ENCODE measurements at regions of chr16 and their contacts with region 1.

Region 1: DNA sequence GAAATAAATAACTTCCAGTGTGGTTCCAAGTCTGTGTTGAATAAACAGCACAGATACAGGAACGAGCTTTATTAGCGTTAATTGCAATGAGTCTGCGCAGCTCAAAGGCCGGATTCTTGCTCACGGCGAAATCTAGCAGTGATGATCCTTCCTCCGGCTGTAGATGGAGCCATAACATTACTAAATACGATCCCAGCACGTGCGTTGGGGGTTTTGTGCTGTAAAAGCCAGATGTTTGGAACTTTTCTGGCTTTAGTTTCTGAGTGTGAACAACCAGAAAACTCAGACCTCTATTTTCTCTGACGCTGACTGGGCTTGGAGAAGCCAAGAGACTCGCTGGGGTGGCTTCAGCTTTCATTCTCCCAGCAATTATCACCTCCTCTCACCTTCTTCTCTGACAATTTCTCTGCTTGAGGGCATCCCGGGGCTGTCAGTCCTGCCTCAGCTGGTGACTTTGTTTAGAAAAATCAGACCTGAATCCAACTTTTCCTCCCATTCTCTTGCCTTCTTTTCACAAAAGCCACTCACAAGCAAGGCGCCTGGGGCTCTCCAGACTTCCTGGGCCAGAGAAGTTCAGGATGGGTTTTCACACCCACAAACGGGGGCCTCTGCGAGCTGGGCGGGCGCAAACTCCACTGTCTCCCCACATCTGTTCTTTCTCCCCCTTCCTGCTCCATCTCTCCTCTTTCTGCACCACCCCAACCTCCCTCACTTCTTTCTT is 47.1 kb upstream of the AKTIP start:
- DNase-seq: peak; percentile 47
- ATAC-seq: peak; percentile 65
- H3K4me3 Mint-ChIP-seq: no peak overlapping the region
- H3K27ac Mint-ChIP-seq: no peak overlapping the region
- H3K4me1 Mint-ChIP-seq: peaks cover 28% of the 10 kb centered on the region
- H3K27me3 Mint-ChIP-seq: peaks cover 25% of the 10 kb centered on the region
- CTCF ChIP-seq: 0 out of 2 replicates have a peak, but pooled peaks have one; percentile 13

Region 2: GRCh38 chr16:53445534-53445933 is 104.6 kb before region 1 on chr16:
- CTCF ChIA-PET with region 1: no interaction called
- POLR2A ChIA-PET with region 1: no interaction called
- DNase-seq: no peak
- ATAC-seq: no peak
- H3K4me3 Mint-ChIP-seq: no peak overlapping the region
- H3K27ac Mint-ChIP-seq: no peak overlapping the region
- H3K4me1 Mint-ChIP-seq: no peaks in the 10 kb centered on the region
- H3K27me3 Mint-ChIP-seq: no peaks in the 10 kb centered on the region
- CTCF ChIP-seq: no peak

Region 3: GRCh38 chr16:53598511-53599275 is 48.6 kb after region 1 on chr16:
- CTCF ChIA-PET with region 1: interaction called, 14 read pairs
- POLR2A ChIA-PET with region 1: no interaction called
- DNase-seq: no peak
- ATAC-seq: no peak
- H3K4me3 Mint-ChIP-seq: no peak overlapping the region
- H3K27ac Mint-ChIP-seq: no peak overlapping the region
- H3K4me1 Mint-ChIP-seq: no peaks in the 10 kb centered on the region
- H3K27me3 Mint-ChIP-seq: no peaks in the 10 kb centered on the region
- CTCF ChIP-seq: no peak

Region 4: DNA sequence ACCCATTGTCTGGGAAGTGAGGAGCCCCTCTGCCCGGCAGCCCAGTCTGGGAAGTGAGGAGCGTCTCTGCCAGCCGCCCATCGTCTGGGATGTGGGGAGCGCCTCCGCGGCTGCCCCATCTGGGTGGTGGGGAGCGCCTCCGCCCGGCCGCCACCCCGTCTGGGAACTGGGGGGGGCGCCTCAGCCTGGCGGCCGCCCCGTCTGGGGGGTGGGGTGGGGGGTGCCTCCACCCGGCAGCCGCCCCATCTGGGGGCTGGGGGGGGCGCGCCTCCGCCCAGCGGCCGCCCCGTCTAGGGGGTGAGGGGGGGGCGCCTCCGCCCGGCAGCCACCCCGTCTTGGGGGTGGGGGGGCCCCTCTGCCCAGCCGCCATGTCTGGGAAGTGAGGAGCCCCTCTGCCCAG is 75.1 kb after region 1 on chr16:
- CTCF ChIA-PET with region 1: no interaction called
- POLR2A ChIA-PET with region 1: no interaction called
- DNase-seq: no peak
- ATAC-seq: no peak
- H3K4me3 Mint-ChIP-seq: no peak overlapping the region
- H3K27ac Mint-ChIP-seq: no peak overlapping the region
- H3K4me1 Mint-ChIP-seq: peaks cover 5% of the 10 kb centered on the region
- H3K27me3 Mint-ChIP-seq: no peaks in the 10 kb centered on the region
- CTCF ChIP-seq: no peak

Region 5: GRCh38 chr16:53692142-53692541 is 142.0 kb after region 1 on chr16:
- CTCF ChIA-PET with region 1: interaction called, 10 read pairs
- POLR2A ChIA-PET with region 1: no interaction called
- DNase-seq: peak; percentile 49
- ATAC-seq: peak; percentile 24; the same call in 1 of the 2 replicates
- H3K4me3 Mint-ChIP-seq: no peak overlapping the region
- H3K27ac Mint-ChIP-seq: no peak overlapping the region; the same call in 1 of the 2 replicates
- H3K4me1 Mint-ChIP-seq: no peaks in the 10 kb centered on the region
- H3K27me3 Mint-ChIP-seq: no peaks in the 10 kb centered on the region
- CTCF ChIP-seq: no peak

Region 6: GRCh38 chr16:53703590-53704444 is 153.7 kb after region 1 on chr16 and contains the starts of genes FTO and RPGRIP1L:
- CTCF ChIA-PET with region 1: interaction called, 15 read pairs
- POLR2A ChIA-PET with region 1: no interaction called
- DNase-seq: peak; percentile 100
- ATAC-seq: peak; percentile 98
- H3K4me3 Mint-ChIP-seq: peak within 1 kb of the TSS; percentile 99
- H3K27ac Mint-ChIP-seq: peak within 1 kb of the TSS; percentile 95
- H3K4me1 Mint-ChIP-seq: peaks cover 14% of the 10 kb centered on the region
- H3K27me3 Mint-ChIP-seq: no peaks in the 10 kb centered on the region
- CTCF ChIP-seq: no peak
- total RNA-seq, gene FTO: 57.4 to 62.6 TPM (median 59.6 TPM) in 3 replicates
- total RNA-seq, gene RPGRIP1L: 9.8 to 11.7 TPM (median 10.9 TPM) in 3 replicates

Region 7: DNA sequence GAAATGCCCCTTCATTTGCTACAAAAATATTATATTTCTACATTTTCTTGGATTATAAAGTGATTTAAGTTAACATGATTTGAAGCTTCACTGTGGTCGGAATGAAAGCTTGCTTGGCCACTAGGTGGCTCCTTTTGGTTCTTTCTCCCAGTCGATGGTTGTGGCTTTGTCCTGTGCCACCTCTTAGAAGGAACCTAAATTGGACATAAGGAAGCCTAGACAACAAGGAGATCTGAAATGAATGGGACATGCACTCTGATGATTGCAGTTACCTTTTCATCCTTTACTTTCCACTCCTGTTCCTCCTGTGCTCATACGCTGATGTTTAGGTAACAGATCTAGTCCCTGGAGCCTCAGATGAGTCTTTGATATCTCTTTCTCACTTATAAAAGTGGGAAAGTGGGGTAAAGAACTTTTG is 193.0 kb after region 1 on chr16:
- CTCF ChIA-PET with region 1: interaction called, 13 read pairs
- POLR2A ChIA-PET with region 1: no interaction called
- DNase-seq: peak; percentile 21
- ATAC-seq: peak; percentile 57; the same call in 1 of the 2 replicates
- H3K4me3 Mint-ChIP-seq: no peak overlapping the region
- H3K27ac Mint-ChIP-seq: no peak overlapping the region
- H3K4me1 Mint-ChIP-seq: peaks cover 27% of the 10 kb centered on the region
- H3K27me3 Mint-ChIP-seq: no peaks in the 10 kb centered on the region
- CTCF ChIP-seq: peak; percentile 49

Region 8: GRCh38 chr16:53755536-53755910 is 205.4 kb after region 1 on chr16:
- CTCF ChIA-PET with region 1: interaction called, 13 read pairs
- POLR2A ChIA-PET with region 1: no interaction called
- DNase-seq: no peak
- ATAC-seq: no peak
- H3K4me3 Mint-ChIP-seq: no peak overlapping the region
- H3K27ac Mint-ChIP-seq: no peak overlapping the region
- H3K4me1 Mint-ChIP-seq: peaks cover 16% of the 10 kb centered on the region
- H3K27me3 Mint-ChIP-seq: no peaks in the 10 kb centered on the region; the same call in 1 of the 2 replicates
- CTCF ChIP-seq: no peak

Region 9: DNA sequence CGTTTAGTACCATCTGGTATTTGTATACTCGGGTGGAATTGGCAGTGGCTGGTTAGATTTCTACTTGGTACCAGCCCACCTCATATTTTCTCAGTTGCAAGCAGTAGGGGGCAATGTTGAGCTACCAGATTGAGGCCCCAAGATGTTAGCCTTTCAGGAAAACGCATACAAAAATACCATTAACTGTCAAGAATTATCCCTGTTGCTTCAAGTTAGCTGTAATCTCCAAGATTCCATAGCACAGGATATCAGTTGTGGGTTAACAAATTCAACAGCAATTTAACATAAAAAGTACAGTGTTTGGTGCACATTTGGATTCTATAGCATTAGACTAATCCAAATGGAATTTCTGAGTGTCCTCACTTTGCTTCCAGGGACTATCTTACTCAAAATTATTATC is 342.0 kb after region 1 on chr16:
- CTCF ChIA-PET with region 1: interaction called, 12 read pairs
- POLR2A ChIA-PET with region 1: no interaction called
- DNase-seq: peak; percentile 54
- ATAC-seq: peak; percentile 79
- H3K4me3 Mint-ChIP-seq: no peak overlapping the region
- H3K27ac Mint-ChIP-seq: no peak overlapping the region
- H3K4me1 Mint-ChIP-seq: peaks cover 33% of the 10 kb centered on the region
- H3K27me3 Mint-ChIP-seq: no peaks in the 10 kb centered on the region
- CTCF ChIP-seq: peak; percentile 49

Measured in WTC11 (cell line).